Activated naive CD4-positive, alpha-beta T cell treated with anti-CD3 and anti-CD28 coated beads for 36 hours (primary cell): ENCODE measurements at regions of chr5 and their contacts with region 1.

Region 1: DNA sequence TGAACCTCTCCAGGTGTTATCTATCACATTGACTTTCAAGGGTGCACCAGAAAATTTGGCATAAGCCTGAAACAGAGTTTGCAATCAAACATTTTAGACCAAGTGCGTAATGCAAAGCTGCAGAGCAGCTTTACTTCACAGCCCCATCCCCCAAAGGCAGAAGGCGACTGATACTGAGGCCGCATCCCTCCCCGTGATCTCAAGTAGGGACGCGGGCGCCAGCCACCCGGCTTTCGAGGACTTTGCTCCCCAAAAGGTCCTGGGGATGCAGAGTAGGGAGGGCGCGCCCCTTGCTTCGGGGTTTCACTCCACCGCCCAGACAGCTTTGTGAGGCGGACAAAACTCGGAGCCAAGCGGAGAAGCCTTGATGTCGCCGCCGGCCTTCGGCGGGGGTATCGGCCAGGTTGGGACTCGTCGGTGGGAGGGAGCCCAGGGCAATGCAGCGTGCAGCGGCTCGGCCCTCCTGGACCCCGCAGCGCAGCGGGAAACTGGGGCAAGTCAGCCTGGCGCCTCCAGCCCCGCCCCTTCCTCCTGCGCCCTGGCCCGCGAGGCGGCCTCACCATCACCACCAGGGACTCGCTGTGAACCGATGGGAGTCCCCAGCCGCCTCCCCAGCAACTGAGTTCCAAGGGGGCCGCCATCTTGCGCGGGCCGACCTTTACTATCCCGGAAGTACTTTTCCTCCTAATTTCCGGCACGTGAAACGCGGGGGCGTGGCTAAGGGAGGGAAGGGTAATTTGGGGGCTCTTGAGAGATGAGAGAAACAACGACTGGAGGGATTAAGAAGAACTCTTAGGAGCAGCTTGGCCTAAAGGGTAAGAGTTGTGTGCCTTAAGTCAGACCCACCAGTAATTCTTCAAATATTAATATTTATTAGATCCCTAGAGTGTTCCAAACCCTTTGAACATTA is at the start of gene MTX3:
- DNase-seq: peak; percentile 93
- H3K4me3 Mint-ChIP-seq: peak within 1 kb of the TSS; percentile 84
- H3K27ac Mint-ChIP-seq: peak within 1 kb of the TSS; percentile 92
- H3K4me1 Mint-ChIP-seq: peaks cover 40% of the 10 kb centered on the region
- H3K27me3 Mint-ChIP-seq: no peaks in the 10 kb centered on the region
- total RNA-seq, gene MTX3: 5.7 to 6.1 TPM

Region 2: DNA sequence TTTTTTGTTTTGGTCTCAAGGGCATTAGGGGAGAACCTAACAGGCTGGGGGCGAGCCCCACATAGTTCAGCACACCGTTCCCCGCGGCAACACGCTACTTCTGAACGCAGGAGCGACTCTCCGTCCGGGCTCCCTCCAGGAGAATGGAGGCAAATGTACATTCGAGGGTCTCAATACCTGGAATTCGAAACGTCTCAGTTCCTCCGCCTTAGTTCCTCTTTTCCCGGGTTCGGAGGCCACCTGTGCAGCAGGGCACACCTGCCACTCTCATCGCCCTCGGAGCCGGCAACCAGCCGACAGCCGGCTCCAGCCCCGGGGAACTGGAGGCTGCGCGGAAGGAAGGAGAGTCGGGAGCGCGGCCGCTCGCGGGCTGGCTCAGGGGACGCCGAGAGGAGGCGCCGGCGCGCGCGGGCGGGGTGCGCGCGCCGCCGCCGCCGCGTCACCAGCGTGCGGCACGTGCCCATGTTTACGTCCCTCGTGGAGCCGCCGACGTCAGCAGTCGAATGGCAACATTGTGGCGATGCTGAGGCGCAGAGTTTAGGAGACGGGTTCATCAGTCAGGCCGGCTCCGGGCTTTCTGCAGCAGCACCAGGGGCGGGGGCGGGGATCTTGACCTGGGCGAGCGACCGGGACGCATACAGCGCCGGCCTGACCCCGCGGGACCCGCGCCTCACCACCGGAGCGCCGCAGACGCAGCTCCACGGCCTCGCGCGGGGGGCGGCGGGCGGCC is 755.1 kb before region 1 on chr5 and contains the start of gene JMY:
- CTCF ChIA-PET with region 1: no interaction called
- intact Hi-C with region 1: loop called (anchors 1 kb)
- DNase-seq: peak; percentile 90
- H3K4me3 Mint-ChIP-seq: peak within 1 kb of the TSS; percentile 91
- H3K27ac Mint-ChIP-seq: peak within 1 kb of the TSS; percentile 99
- H3K4me1 Mint-ChIP-seq: peaks cover 17% of the 10 kb centered on the region
- H3K27me3 Mint-ChIP-seq: no peaks in the 10 kb centered on the region
- total RNA-seq, gene JMY: 11.8 to 12.1 TPM

Region 3: DNA sequence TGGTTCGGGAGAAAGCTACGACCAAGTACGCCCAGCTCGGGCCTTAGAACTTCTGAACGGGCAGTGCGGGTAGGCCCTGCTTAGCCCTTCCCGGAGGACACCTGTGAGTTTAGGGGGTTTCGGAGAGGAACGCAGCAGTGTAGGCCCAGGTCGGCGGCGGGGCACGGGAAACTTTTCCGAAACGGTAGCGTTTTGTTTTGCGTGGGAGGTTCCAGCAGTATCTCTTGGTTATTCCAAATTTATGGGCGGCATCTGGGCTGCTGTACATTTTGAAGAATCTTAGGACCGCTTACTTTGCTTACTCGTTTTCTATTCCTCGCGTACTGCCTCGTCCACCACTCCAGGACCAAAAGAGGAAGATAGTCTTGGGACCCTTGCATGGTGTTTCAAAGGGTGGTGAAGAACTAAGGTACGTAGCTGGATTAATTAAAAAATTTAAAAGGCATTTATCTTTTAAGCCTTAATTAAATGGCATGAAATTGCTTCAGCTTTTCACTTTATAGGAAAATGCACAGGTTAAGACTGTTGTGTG is 378.1 kb before region 1 on chr5:
- CTCF ChIA-PET with region 1: no interaction called
- intact Hi-C with region 1: loop called (anchors 2 kb)
- DNase-seq: peak; percentile 51
- H3K4me3 Mint-ChIP-seq: peak overlapping the region; percentile 97
- H3K27ac Mint-ChIP-seq: peak overlapping the region; percentile 98
- H3K4me1 Mint-ChIP-seq: peaks cover 37% of the 10 kb centered on the region
- H3K27me3 Mint-ChIP-seq: no peaks in the 10 kb centered on the region

Region 4: GRCh38 chr5:79857714-79858409 is 133.0 kb before region 1 on chr5:
- CTCF ChIA-PET with region 1: no interaction called
- intact Hi-C with region 1: no loop called
- DNase-seq: peak; percentile 92
- H3K4me3 Mint-ChIP-seq: no peak overlapping the region
- H3K27ac Mint-ChIP-seq: no peak overlapping the region
- H3K4me1 Mint-ChIP-seq: no peaks in the 10 kb centered on the region
- H3K27me3 Mint-ChIP-seq: no peaks in the 10 kb centered on the region

Region 5: DNA sequence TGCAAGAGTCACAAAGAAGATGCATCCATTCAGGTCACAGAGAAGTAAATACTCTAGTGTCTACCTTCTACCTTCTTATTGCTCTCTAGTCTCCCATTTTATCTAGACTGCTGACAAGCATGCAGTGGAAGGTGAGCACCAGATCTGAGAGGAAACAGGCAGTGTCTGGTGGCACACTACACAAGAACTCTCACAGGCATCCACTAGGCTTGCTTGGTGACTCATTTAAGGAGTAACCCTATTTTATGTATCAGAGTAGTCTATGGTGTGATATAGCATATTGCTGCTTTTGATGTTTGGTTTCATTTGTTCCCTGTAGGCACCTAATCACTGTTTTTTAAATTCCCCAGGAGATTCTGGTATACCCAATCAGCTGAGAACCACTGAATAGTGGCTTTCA is 42.7 kb after region 1 on chr5:
- CTCF ChIA-PET with region 1: interaction called, 4 read pairs
- intact Hi-C with region 1: loop called (anchors 1 kb)
- DNase-seq: peak; percentile 64
- H3K4me3 Mint-ChIP-seq: no peak overlapping the region
- H3K27ac Mint-ChIP-seq: no peak overlapping the region
- H3K4me1 Mint-ChIP-seq: peaks cover 37% of the 10 kb centered on the region
- H3K27me3 Mint-ChIP-seq: peaks cover 40% of the 10 kb centered on the region

Region 6: GRCh38 chr5:80407735-80408482 is 417.1 kb after region 1 on chr5 and contains the start of gene ZFYVE16:
- CTCF ChIA-PET with region 1: no interaction called
- intact Hi-C with region 1: loop called (anchors 2 kb)
- DNase-seq: peak; percentile 97
- H3K4me3 Mint-ChIP-seq: peak within 1 kb of the TSS; percentile 97
- H3K27ac Mint-ChIP-seq: peak within 1 kb of the TSS; percentile 96
- H3K4me1 Mint-ChIP-seq: peaks cover 14% of the 10 kb centered on the region
- H3K27me3 Mint-ChIP-seq: no peaks in the 10 kb centered on the region
- total RNA-seq, gene ZFYVE16: 8.0 to 10.3 TPM

Region 7: GRCh38 chr5:81006947-81007636 is 1016.2 kb after region 1 on chr5:
- CTCF ChIA-PET with region 1: no interaction called
- intact Hi-C with region 1: loop called (anchors 5 kb)
- DNase-seq: peak; percentile 81
- H3K4me3 Mint-ChIP-seq: peak overlapping the region; percentile 89
- H3K27ac Mint-ChIP-seq: peak overlapping the region; percentile 99
- H3K4me1 Mint-ChIP-seq: peaks cover 78% of the 10 kb centered on the region
- H3K27me3 Mint-ChIP-seq: no peaks in the 10 kb centered on the region